Heart right ventricle (tissue), 16 donors: ENCODE measurements at regions of chr15 and their contacts with region 1.

Region 1: DNA sequence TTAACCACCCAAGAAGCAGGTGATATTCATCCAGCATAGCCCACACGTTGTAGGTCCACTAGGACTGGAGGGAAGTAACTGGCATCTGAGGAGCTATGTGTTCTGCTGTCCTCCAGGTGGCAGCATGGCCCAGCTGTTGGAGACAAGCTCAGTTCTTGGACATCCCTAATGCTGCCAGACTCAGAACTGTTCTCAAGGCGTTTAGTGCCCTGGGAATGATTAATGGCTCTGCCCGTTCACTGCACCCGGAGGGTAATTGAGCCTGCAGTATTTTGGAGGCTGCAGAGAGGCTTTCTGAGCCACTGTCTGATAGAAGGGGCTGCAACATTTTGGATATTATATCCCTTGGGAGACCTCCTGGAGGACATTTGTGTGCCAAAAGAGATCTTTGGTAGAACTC is 521.2 kb upstream of the SEMA6D start:
- DNase-seq: peak; percentile 77 to 82
- ATAC-seq: peak; percentile 86 to 99 (median 95)
- H3K4me3 ChIP-seq: no peak overlapping the region
- H3K27ac ChIP-seq: no peak overlapping the region
- H3K4me1 ChIP-seq: peaks cover 0 to 4% (median 0%) of the 10 kb centered on the region in 9 donors
- H3K27me3 ChIP-seq: no peaks in the 10 kb centered on the region
- CTCF ChIP-seq: peak; percentile 66 to 91 (median 83)

Region 2: GRCh38 chr15:47466351-47466750 is 270.3 kb after region 1 on chr15:
- intact Hi-C with region 1: loop called in 1 of 10 experiments (anchors 10 kb)
- DNase-seq: no peak
- ATAC-seq: no peak
- H3K4me3 ChIP-seq: no peak overlapping the region
- H3K27ac ChIP-seq: no peak overlapping the region
- H3K4me1 ChIP-seq: peaks cover 0 to 1% (median 0%) of the 10 kb centered on the region in 9 donors
- H3K27me3 ChIP-seq: no peaks in the 10 kb centered on the region
- CTCF ChIP-seq: no peak

Region 3: GRCh38 chr15:47618241-47618640 is 422.2 kb after region 1 on chr15:
- intact Hi-C with region 1: loop called in 3 of 10 experiments (anchors 5 to 10 kb)
- DNase-seq: no peak
- ATAC-seq: no peak
- H3K4me3 ChIP-seq: no peak overlapping the region
- H3K27ac ChIP-seq: no peak overlapping the region
- H3K4me1 ChIP-seq: no peaks in the 10 kb centered on the region
- H3K27me3 ChIP-seq: peaks cover 0 to 23% (median 15%) of the 10 kb centered on the region in 7 donors
- CTCF ChIP-seq: no peak

Region 4: GRCh38 chr15:47717036-47717611 is 521.1 kb after region 1 on chr15 and contains the start of gene SEMA6D:
- intact Hi-C with region 1: loop called in 2 of 10 experiments (anchors 5 to 10 kb)
- DNase-seq: peak; percentile 72 to 83
- ATAC-seq: peak; percentile 77 to 90 (median 82)
- H3K4me3 ChIP-seq: peak within 1 kb of the TSS; percentile 70 to 98 (median 88)
- H3K27ac ChIP-seq: peak within 1 kb of the TSS; percentile 73 to 94 (median 89)
- H3K4me1 ChIP-seq: peaks cover 0 to 48% (median 20%) of the 10 kb centered on the region in 9 donors
- H3K27me3 ChIP-seq: peaks cover 0 to 63% (median 0%) of the 10 kb centered on the region in 7 donors
- CTCF ChIP-seq: peak; percentile 21 to 77 (median 48)
- total RNA-seq, gene SEMA6D: 4.6 to 20.1 (median 12.9) TPM

Region 5: GRCh38 chr15:48084759-48085590 is 888.9 kb after region 1 on chr15:
- intact Hi-C with region 1: loop called in 1 of 10 experiments (anchors 10 kb)
- DNase-seq: no peak
- ATAC-seq: no peak
- H3K4me3 ChIP-seq: no peak overlapping the region
- H3K27ac ChIP-seq: no peak overlapping the region
- H3K4me1 ChIP-seq: no peaks in the 10 kb centered on the region
- H3K27me3 ChIP-seq: peaks cover 0 to 15% (median 5%) of the 10 kb centered on the region in 7 donors
- CTCF ChIP-seq: peak in 5 of 9 donors; percentile 24 to 36 (median 30)

Region 6: GRCh38 chr15:48285329-48286214 is 1089.5 kb after region 1 on chr15:
- intact Hi-C with region 1: loop called in 8 of 10 experiments (anchors 2 to 10 kb)
- DNase-seq: peak in 1 of 2 donors; percentile 61
- ATAC-seq: peak in 7 of 8 donors; percentile 70 to 82 (median 78)
- H3K4me3 ChIP-seq: peak overlapping the region in 6 of 10 donors; percentile 9 to 35 (median 28)
- H3K27ac ChIP-seq: no peak overlapping the region
- H3K4me1 ChIP-seq: peaks cover 0 to 30% (median 5%) of the 10 kb centered on the region in 9 donors
- H3K27me3 ChIP-seq: no peaks in the 10 kb centered on the region
- CTCF ChIP-seq: peak; percentile 56 to 82 (median 72)